ENCODE measurements at regions of chr1 and their contacts with region 1.

Region 1: DNA sequence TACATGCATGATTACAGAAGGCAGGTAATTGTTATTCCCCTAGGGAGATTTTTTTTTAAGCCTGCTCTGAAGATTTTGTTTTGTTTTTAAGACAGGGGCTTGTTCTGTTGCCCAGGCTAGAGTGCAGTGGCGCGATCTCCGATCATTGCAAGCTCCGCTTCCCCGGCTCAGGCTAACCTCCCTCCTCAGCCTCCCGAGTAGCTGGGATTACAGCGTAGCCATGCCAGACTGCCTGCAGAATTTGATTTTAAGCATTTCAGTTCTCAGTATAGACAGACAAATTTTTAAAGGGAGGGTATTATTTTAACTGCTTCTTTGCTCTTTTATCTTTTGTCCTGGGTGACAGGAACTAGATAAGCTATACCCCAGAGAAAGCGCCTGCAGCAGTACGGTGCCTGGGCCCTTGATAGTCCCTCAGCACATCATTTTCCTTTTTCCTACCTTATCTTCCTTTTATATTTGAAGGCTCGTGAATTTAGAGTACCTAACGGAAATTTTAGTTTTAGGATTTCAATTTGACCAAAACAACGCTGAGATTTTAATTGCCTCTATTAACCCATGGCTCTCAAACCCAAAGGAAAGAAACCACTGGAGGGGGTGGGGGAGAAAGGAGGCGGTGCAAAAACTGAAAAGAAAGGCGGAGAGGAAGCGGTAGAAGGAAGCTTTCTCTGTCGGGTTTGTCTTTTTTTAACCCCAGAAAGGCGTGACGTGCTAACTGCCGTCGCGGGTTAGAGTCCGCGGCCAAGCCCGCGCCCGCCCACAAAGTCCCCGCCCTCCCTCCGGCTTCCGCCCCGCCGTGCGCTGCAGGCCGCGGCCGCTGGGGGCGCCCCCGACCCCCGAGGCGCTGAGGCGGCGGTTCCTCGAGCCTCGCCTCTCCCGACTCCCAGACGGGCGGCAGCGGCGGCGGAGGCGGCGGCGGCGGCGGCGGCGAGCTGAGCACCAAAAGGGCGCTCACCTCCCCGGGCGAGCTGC is at the start of gene EEIG2:
- DNase-seq: peak; percentile 83 to 89 (median 89)
- H3K4me3 ChIP-seq: peak within 1 kb of the TSS; percentile 81 to 89 (median 85)
- H3K4me3 Mint-ChIP-seq: peak within 1 kb of the TSS; percentile 98 to 99
- H3K27ac ChIP-seq: peak within 1 kb of the TSS; percentile 67 to 93
- H3K27ac Mint-ChIP-seq: peak within 1 kb of the TSS; percentile 91 to 96 (median 94)
- H3K4me1 ChIP-seq: peaks cover 73 to 80% of the 10 kb centered on the region in 2 donors
- H3K4me1 Mint-ChIP-seq: peaks cover 33% of the 10 kb centered on the region
- H3K27me3 ChIP-seq: no peaks in the 10 kb centered on the region
- H3K27me3 Mint-ChIP-seq: peaks cover 0 to under 1% (median 0%) of the 10 kb centered on the region in 3 donors
- CTCF ChIP-seq: peak; percentile 85
- polyA plus RNA-seq, gene EEIG2: 1.4 to 8.4 (median 4.3) TPM

Region 2: DNA sequence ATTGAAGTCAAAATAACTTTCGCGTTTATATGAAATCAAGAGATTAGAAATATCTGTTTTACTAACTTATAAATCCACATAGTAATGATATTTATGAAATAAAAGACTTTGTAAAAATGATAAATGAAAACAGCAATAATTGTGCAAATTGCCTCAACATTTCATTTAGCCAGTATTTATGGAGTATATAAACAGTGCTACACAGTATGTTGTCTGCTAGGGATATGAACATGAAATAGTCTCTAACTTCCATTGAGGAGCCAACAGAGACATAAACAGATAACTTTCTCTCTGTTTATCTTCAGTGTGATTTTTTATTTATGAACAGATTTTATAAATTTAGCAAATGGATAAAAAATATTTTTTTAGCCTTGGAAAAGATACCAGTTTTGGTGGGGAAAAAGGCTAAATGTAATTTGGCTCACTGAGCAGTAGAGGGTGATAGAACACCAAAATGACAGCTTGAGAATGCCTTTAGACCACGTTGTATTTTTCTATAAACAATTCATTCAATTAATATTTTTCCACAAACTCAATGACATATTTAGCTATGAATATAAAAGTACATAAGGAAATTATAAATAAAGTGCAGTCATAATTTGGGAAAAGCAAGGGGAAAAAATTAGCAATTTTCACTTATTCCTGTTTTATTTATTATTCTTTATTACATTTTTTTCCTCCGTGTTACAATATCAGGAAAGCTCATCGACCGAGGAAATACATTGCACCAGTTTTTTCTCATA is 47.1 kb before region 1 on chr1:
- intact Hi-C with region 1: loop called (anchors 1 to 2 kb)
- DNase-seq: peak; percentile 30 to 60 (median 48)
- H3K4me3 ChIP-seq: no peak overlapping the region
- H3K4me3 Mint-ChIP-seq: no peak overlapping the region
- H3K27ac ChIP-seq: no peak overlapping the region
- H3K27ac Mint-ChIP-seq: no peak overlapping the region
- H3K4me1 ChIP-seq: peaks cover 3 to 5% of the 10 kb centered on the region in 2 donors
- H3K4me1 Mint-ChIP-seq: peaks cover 5% of the 10 kb centered on the region
- H3K27me3 ChIP-seq: peaks cover 18 to 27% of the 10 kb centered on the region in 2 donors
- H3K27me3 Mint-ChIP-seq: peaks cover 8 to 15% (median 14%) of the 10 kb centered on the region in 3 donors
- CTCF ChIP-seq: peak; percentile 95

Region 3: DNA sequence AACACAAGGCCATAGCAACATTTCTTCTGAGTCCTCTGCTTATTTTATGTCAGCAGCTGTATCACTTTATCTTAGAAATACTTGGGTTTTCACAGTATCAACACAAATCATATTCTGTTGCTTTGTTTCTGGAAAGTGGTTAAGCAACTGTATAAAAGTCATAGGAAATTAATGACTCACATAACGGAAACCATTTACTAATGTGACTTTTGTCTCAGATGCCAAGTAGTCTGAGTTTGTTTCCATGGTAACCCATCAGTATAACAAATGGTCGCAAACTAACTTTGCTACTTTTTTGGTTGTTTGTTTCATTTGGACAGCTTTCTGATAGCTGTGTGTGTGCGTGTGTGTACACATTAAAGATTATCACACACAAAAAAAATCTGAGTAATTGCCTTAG is 31.5 kb after region 1 on chr1:
- intact Hi-C with region 1: loop called in 1 of 2 experiments (anchors 5 kb)
- DNase-seq: peak; percentile 85 to 99 (median 93)
- H3K4me3 ChIP-seq: no peak overlapping the region
- H3K4me3 Mint-ChIP-seq: no peak overlapping the region
- H3K27ac ChIP-seq: peak overlapping the region in 1 of 2 donors; percentile 88
- H3K27ac Mint-ChIP-seq: peak overlapping the region; percentile 91 to 98 (median 96)
- H3K4me1 ChIP-seq: peaks cover 40 to 49% of the 10 kb centered on the region in 2 donors
- H3K4me1 Mint-ChIP-seq: peaks cover 53% of the 10 kb centered on the region
- H3K27me3 ChIP-seq: no peaks in the 10 kb centered on the region
- H3K27me3 Mint-ChIP-seq: peaks cover 0 to 6% (median 2%) of the 10 kb centered on the region in 3 donors
- CTCF ChIP-seq: no peak

Region 4: DNA sequence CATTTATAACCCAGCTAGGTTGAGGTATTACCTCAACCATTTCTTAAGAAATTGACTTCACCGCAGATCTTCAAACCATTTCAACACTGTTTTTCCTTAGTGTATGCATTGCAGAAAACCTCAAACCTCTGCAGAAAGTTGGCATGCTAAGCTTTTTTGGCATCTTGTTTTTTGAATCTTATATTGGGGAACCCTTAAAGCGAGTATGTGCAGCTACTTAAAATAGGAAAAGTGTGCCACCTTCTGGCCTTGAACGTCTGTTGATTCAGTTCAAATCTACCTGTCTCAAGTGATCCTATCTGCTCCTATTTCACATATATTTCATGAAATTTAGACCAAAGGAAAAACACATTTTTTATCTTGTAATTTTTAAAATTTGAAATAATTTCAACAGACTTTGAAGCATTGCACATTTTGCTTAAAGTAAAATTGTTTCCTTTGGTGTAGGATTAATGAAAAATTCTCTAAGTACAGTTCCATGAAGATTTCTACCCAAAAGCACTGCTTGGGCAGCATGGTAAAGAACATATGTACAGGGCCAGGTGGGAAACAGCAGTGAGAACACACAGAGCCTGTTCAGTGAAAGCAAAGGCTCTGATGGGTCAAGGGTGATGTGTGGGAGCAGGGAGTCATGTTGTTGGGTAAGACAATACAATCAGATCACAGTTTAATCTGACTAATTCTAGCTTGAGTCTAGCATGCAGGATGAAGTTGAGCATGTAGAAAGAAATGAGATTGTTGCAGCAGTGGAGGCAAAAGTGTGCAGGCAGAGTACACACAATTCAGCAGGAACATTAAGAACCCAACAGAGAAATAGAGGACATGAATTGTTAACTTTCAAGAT is 84.2 kb after region 1 on chr1:
- intact Hi-C with region 1: loop called in 1 of 2 experiments (anchors 10 kb)
- DNase-seq: peak; percentile 33 to 56 (median 52)
- H3K4me3 ChIP-seq: no peak overlapping the region
- H3K4me3 Mint-ChIP-seq: no peak overlapping the region
- H3K27ac ChIP-seq: no peak overlapping the region
- H3K27ac Mint-ChIP-seq: peak overlapping the region in 1 of 7 donors; percentile 20
- H3K4me1 ChIP-seq: peaks cover 32 to 36% of the 10 kb centered on the region in 2 donors
- H3K4me1 Mint-ChIP-seq: peaks cover 51% of the 10 kb centered on the region
- H3K27me3 ChIP-seq: no peaks in the 10 kb centered on the region
- H3K27me3 Mint-ChIP-seq: peaks cover 0 to 2% (median 1%) of the 10 kb centered on the region in 3 donors
- CTCF ChIP-seq: peak; percentile 68

Region 5: DNA sequence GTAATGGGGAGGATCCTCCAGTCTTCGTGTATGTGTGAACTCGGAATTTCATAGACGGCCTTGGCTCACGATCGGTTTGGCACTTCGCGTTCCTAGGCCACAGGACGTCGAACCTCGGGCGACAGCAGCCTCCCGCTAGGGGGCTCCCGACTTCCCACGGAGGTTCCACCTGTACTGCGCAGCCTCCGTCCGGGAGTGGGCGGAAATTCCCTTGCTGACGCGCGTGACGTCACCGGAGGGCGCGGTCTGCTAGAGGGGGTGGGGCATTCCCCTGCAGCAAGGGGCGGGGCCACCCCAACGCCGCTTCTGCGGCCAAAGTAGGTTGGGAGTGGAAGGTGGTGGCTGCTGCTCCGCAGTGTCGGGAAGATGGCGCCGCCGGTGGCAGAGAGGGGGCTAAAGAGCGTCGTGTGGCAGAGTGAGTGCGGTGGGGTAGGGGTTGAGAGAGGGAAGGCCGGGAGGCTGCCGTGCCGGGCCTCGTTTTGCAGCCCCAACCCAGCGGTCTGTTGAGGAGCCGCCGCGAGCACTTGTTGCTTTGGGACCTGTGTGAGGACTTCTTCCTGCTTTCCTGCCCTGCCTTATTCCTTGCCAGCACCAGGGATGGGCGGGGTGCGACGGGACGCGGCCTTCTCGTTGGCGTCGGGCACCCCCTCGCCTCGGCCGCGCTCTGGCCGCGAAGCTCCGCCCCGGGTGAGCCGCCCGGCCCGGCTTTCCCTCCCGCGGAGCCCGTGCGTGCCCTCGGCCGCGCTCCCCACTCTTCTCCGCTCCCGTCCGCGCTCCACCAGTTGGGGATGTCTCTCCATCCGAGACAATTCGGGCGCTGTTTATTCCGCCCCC is 187.1 kb after region 1 on chr1 and contains the start of gene STXBP3:
- intact Hi-C with region 1: loop called in 1 of 2 experiments (anchors 10 kb)
- DNase-seq: peak; percentile 97 to 99 (median 99)
- H3K4me3 ChIP-seq: peak within 1 kb of the TSS; percentile 79 to 99 (median 85)
- H3K4me3 Mint-ChIP-seq: peak within 1 kb of the TSS; percentile 91 to 99
- H3K27ac ChIP-seq: peak within 1 kb of the TSS; percentile 97 to 100
- H3K27ac Mint-ChIP-seq: peak within 1 kb of the TSS; percentile 99 to 100 (median 99)
- H3K4me1 ChIP-seq: peaks cover 12 to 20% of the 10 kb centered on the region in 2 donors
- H3K4me1 Mint-ChIP-seq: peaks cover 33% of the 10 kb centered on the region
- H3K27me3 ChIP-seq: no peaks in the 10 kb centered on the region
- H3K27me3 Mint-ChIP-seq: no peaks in the 10 kb centered on the region
- CTCF ChIP-seq: peak; percentile 94
- polyA plus RNA-seq, gene STXBP3: 32.3 to 56.2 (median 48.3) TPM

Measured in CD14-positive monocyte (primary cell).